Activated CD4-positive, alpha-beta T cell treated with anti-CD3 and anti-CD28 coated beads for 36 hours (primary cell): ENCODE measurements at regions of chr12 and their contacts with region 1.

Region 1: GRCh38 chr12:93569656-93570551 is 2.6 kb upstream of the SOCS2 start:
- DNase-seq: peak; percentile 88
- ATAC-seq: peak; percentile 67
- H3K4me3 Mint-ChIP-seq: peak overlapping the region; percentile 82
- H3K27ac Mint-ChIP-seq: peak overlapping the region; percentile 75
- H3K4me1 Mint-ChIP-seq: peaks cover 16% of the 10 kb centered on the region
- H3K27me3 Mint-ChIP-seq: peaks cover 23% of the 10 kb centered on the region

Region 2: GRCh38 chr12:93434256-93434865 is 135.5 kb before region 1 on chr12:
- CTCF ChIA-PET with region 1: no interaction called
- POLR2A ChIA-PET with region 1: no interaction called
- intact Hi-C with region 1: no loop called
- DNase-seq: no peak
- ATAC-seq: no peak
- H3K4me3 Mint-ChIP-seq: no peak overlapping the region
- H3K27ac Mint-ChIP-seq: no peak overlapping the region
- H3K4me1 Mint-ChIP-seq: peaks cover 80% of the 10 kb centered on the region
- H3K27me3 Mint-ChIP-seq: no peaks in the 10 kb centered on the region

Region 3: GRCh38 chr12:93502802-93503623 is 66.9 kb before region 1 on chr12:
- CTCF ChIA-PET with region 1: interaction called, 18 read pairs
- POLR2A ChIA-PET with region 1: no interaction called
- intact Hi-C with region 1: loop called (anchors 1 to 5 kb)
- DNase-seq: peak; percentile 70
- ATAC-seq: peak; percentile 44
- H3K4me3 Mint-ChIP-seq: no peak overlapping the region
- H3K27ac Mint-ChIP-seq: no peak overlapping the region
- H3K4me1 Mint-ChIP-seq: peaks cover 10% of the 10 kb centered on the region
- H3K27me3 Mint-ChIP-seq: no peaks in the 10 kb centered on the region

Region 4: DNA sequence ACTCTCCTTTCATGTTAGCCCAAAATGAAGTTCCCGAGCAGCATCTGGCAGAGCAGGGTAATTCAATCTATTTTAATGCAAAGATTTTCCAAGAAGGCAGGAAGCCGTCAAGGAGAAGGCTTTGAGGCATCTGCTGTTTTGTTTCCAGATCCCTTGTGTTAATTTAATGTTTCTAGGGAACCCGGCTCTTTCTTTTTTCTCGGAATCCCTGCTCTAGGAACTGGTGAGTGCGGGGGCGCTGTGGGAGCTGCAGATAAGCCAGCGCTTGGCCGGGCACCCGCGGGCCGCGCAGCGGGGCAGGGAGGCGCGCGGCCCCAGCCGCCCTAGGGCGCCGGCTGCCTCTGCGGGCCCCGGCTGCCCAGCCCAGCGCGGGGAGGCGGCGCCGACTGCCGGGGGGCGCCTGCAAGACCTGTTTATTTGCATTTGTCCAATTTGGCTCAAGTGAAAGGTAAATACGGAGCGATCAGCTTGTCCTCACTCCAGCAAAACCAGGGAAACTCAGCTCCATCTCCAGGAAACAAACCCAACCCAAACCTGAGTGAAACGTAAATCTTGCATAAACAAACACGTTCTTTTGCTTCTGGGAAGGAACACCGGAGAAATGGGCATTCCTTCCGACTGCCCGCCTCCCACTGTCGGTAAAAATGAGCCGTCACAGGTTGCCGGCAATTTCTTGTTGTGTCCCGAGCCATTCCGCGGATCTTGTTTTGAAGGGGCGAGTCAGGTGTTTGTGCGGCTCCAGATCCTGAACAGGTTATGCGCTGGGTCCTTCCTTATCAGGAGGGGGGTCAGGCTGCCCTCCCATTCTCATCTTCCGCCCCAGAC is 172.4 kb after region 1 on chr12:
- CTCF ChIA-PET with region 1: interaction called, 3 read pairs
- POLR2A ChIA-PET with region 1: no interaction called
- intact Hi-C with region 1: loop called (anchors 1 to 2 kb)
- DNase-seq: peak; percentile 74
- ATAC-seq: peak; percentile 88
- H3K4me3 Mint-ChIP-seq: peak overlapping the region; percentile 80
- H3K27ac Mint-ChIP-seq: peak overlapping the region; percentile 90
- H3K4me1 Mint-ChIP-seq: peaks cover 21% of the 10 kb centered on the region
- H3K27me3 Mint-ChIP-seq: peaks cover 2% of the 10 kb centered on the region

Region 5: GRCh38 chr12:93785262-93786010 is 215.5 kb after region 1 on chr12:
- CTCF ChIA-PET with region 1: interaction called, 3 read pairs
- POLR2A ChIA-PET with region 1: no interaction called
- intact Hi-C with region 1: loop called in 1 of 2 experiments (anchors 1 kb)
- DNase-seq: peak; percentile 72
- ATAC-seq: peak; percentile 76
- H3K4me3 Mint-ChIP-seq: peak overlapping the region; percentile 20
- H3K27ac Mint-ChIP-seq: peak overlapping the region; percentile 87
- H3K4me1 Mint-ChIP-seq: peaks cover 70% of the 10 kb centered on the region
- H3K27me3 Mint-ChIP-seq: no peaks in the 10 kb centered on the region

Region 6: GRCh38 chr12:93813186-93813585 is 243.3 kb after region 1 on chr12:
- CTCF ChIA-PET with region 1: no interaction called
- POLR2A ChIA-PET with region 1: no interaction called
- intact Hi-C with region 1: no loop called
- DNase-seq: no peak
- ATAC-seq: no peak
- H3K4me3 Mint-ChIP-seq: no peak overlapping the region
- H3K27ac Mint-ChIP-seq: no peak overlapping the region
- H3K4me1 Mint-ChIP-seq: peaks cover 6% of the 10 kb centered on the region
- H3K27me3 Mint-ChIP-seq: no peaks in the 10 kb centered on the region

Region 7: GRCh38 chr12:94262228-94263010 is 692.5 kb after region 1 on chr12:
- CTCF ChIA-PET with region 1: no interaction called
- POLR2A ChIA-PET with region 1: no interaction called
- intact Hi-C with region 1: loop called in 1 of 2 experiments (anchors 5 kb)
- DNase-seq: peak; percentile 87
- ATAC-seq: peak; percentile 83
- H3K4me3 Mint-ChIP-seq: peak overlapping the region; percentile 81
- H3K27ac Mint-ChIP-seq: peak overlapping the region; percentile 99
- H3K4me1 Mint-ChIP-seq: peaks cover 44% of the 10 kb centered on the region
- H3K27me3 Mint-ChIP-seq: no peaks in the 10 kb centered on the region